Panc1 (cell line): ENCODE measurements at regions of chr12 and their contacts with region 1.

Region 1: DNA sequence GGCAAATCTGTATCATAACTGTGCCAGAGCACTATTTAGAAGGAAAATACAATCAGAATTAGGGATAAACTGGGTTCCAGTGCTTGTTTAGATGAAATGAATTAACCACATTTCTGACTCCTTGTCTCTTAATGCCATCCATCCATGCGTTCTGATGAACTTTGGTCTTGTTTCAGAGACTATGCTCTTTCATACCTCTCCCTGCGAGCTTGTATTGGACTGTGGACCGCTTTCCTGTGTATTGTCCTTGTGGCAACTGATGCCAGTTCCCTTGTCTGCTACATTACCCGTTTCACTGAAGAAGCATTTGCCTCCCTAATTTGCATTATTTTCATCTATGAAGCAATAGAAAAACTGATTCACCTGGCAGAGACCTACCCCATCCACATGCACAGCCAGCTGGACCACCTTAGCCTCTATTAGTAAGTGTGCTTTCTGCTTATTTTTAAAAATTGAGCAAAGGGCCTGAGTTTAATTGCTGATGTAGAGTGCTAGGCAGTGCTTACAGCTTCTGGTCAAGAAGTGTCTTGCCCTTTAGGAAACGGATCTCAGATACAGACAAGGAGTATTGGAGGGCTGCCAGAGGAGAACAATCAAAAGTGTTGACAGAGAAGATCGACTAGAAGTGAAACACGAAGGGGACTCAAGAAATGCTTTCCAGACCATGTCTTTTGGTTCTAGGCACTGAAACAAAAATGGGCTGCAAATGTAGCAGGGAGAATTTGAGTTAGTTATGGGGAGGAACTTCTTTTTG is 46.7 kb downstream of the SLC4A8 start:
- DNase-seq: no peak
- ATAC-seq: no peak
- H3K4me3 ChIP-seq: no peak overlapping the region
- H3K27ac ChIP-seq: no peak overlapping the region
- H3K4me1 ChIP-seq: no peaks in the 10 kb centered on the region
- H3K27me3 ChIP-seq: no peaks in the 10 kb centered on the region
- CTCF ChIP-seq: no peak

Region 2: GRCh38 chr12:51449577-51450246 is 21.6 kb before region 1 on chr12:
- CTCF ChIA-PET with region 1: no interaction called
- POLR2A ChIA-PET with region 1: interaction called, 12 read pairs
- in situ Hi-C with region 1: no loop called
- intact Hi-C with region 1: no loop called
- DNase-seq: no peak
- ATAC-seq: no peak
- H3K4me3 ChIP-seq: no peak overlapping the region
- H3K27ac ChIP-seq: no peak overlapping the region
- H3K4me1 ChIP-seq: no peaks in the 10 kb centered on the region
- H3K27me3 ChIP-seq: no peaks in the 10 kb centered on the region
- CTCF ChIP-seq: no peak

Region 3: GRCh38 chr12:51460519-51460918 is 10.8 kb before region 1 on chr12:
- CTCF ChIA-PET with region 1: no interaction called
- POLR2A ChIA-PET with region 1: no interaction called
- in situ Hi-C with region 1: no loop called
- intact Hi-C with region 1: no loop called
- DNase-seq: no peak
- ATAC-seq: no peak
- H3K4me3 ChIP-seq: no peak overlapping the region
- H3K27ac ChIP-seq: no peak overlapping the region
- H3K4me1 ChIP-seq: no peaks in the 10 kb centered on the region
- H3K27me3 ChIP-seq: no peaks in the 10 kb centered on the region
- CTCF ChIP-seq: no peak